Heart left ventricle (tissue), 16 donors: ENCODE measurements at regions of chr19 and their contacts with region 1.

Region 1: GRCh38 chr19:34269968-34270621 is 15.7 kb downstream of the GARRE1 start:
- DNase-seq: peak in 4 of 5 donors; percentile 64 to 80 (median 74)
- ATAC-seq: peak; percentile 74 to 91 (median 85)
- H3K4me3 ChIP-seq: peak overlapping the region in 9 of 12 donors; percentile 4 to 58 (median 30)
- H3K27ac ChIP-seq: peak overlapping the region; percentile 68 to 93 (median 85)
- H3K4me1 ChIP-seq: peaks cover 0 to 78% (median 60%) of the 10 kb centered on the region in 12 donors
- H3K27me3 ChIP-seq: no peaks in the 10 kb centered on the region
- CTCF ChIP-seq: no peak
- POLR2A ChIP-seq: peak in 1 of 2 donors; percentile 34

Region 2: DNA sequence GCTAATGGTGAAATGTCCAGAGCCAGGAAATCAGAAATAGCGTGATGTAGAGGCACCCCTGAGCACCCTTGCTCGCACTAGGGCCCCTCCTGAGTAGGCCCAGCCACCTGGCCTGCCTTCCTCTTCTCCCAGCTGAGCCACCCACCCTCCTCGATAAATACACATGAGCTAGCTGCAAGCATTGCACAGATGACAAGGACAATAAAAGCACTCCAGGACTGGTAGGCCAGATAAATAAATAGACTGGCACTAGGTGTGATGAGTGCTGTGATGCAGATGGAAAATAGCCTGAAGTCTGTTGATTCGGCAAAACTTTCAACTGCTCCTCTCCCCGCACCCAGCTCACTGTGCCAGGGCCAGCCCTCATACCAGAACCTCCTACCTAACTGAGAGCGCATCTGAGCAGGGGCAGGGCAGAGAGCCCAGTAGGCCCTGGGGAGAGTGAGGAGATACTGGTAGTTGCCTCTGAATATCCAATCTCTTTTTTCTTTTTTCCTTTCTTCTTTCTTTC is 40.4 kb after region 1 on chr19:
- intact Hi-C with region 1: loop called in 2 of 10 experiments (anchors 5 kb)
- DNase-seq: no peak
- ATAC-seq: peak in 2 of 4 donors; percentile 43 to 48
- H3K4me3 ChIP-seq: no peak overlapping the region
- H3K27ac ChIP-seq: peak overlapping the region in 2 of 12 donors; percentile 13 to 24
- H3K4me1 ChIP-seq: peaks cover 0 to 64% (median 35%) of the 10 kb centered on the region in 12 donors
- H3K27me3 ChIP-seq: no peaks in the 10 kb centered on the region
- CTCF ChIP-seq: no peak
- POLR2A ChIP-seq: no peak

Region 3: GRCh38 chr19:34317311-34317927 is 47.3 kb after region 1 on chr19:
- intact Hi-C with region 1: loop called in 2 of 10 experiments (anchors 5 kb)
- DNase-seq: peak in 2 of 5 donors; percentile 47 to 55
- ATAC-seq: peak; percentile 62 to 78 (median 66)
- H3K4me3 ChIP-seq: peak overlapping the region in 1 of 12 donors; percentile 11
- H3K27ac ChIP-seq: peak overlapping the region in 11 of 12 donors; percentile 23 to 81 (median 68)
- H3K4me1 ChIP-seq: peaks cover 6 to 72% (median 41%) of the 10 kb centered on the region in 12 donors
- H3K27me3 ChIP-seq: no peaks in the 10 kb centered on the region
- CTCF ChIP-seq: no peak
- POLR2A ChIP-seq: no peak